ENCODE measurements at regions of chr1 and their contacts with region 1.

Region 1: DNA sequence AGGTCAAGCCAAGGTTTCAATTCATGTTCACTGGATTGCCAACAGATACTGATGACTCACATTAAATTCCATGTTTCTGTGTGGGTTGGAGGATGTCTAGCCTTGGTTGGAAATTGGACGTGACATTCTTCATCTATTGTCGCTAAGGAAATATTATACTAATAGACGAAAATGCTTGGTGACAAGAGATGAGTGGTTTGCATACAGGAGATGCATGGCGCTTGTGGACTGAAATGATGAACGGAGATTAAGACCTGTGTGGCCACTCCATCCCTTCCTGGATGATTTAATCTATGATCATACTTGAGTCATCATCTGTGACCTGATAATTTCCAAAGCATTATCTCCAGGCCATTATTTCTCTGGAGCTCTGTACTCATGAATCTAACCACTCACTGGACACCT is 97.0 kb upstream of the CD34 start:
- DNase-seq: no peak
- ATAC-seq: no peak
- H3K4me3 ChIP-seq: no peak overlapping the region
- H3K4me3 Mint-ChIP-seq: no peak overlapping the region
- H3K27ac ChIP-seq: no peak overlapping the region
- H3K27ac Mint-ChIP-seq: no peak overlapping the region
- H3K4me1 ChIP-seq: no peaks in the 10 kb centered on the region
- H3K4me1 Mint-ChIP-seq: no peaks in the 10 kb centered on the region
- H3K27me3 ChIP-seq: no peaks in the 10 kb centered on the region
- H3K27me3 Mint-ChIP-seq: peaks cover under 1% of the 10 kb centered on the region
- CTCF ChIP-seq: no peak

Region 2: GRCh38 chr1:207981976-207982375 is 26.0 kb before region 1 on chr1:
- CTCF ChIA-PET with region 1: no interaction called
- POLR2A ChIA-PET with region 1: no interaction called
- intact Hi-C with region 1: no loop called
- DNase-seq: no peak
- ATAC-seq: peak; percentile 49
- H3K4me3 ChIP-seq: no peak overlapping the region
- H3K4me3 Mint-ChIP-seq: no peak overlapping the region
- H3K27ac ChIP-seq: no peak overlapping the region
- H3K27ac Mint-ChIP-seq: no peak overlapping the region
- H3K4me1 ChIP-seq: no peaks in the 10 kb centered on the region
- H3K4me1 Mint-ChIP-seq: no peaks in the 10 kb centered on the region
- H3K27me3 ChIP-seq: peaks cover 0 to 2% of the 10 kb centered on the region in 2 experiments
- H3K27me3 Mint-ChIP-seq: peaks cover 24% of the 10 kb centered on the region
- CTCF ChIP-seq: no peak

Region 3: GRCh38 chr1:207997486-207998268 is 10.3 kb before region 1 on chr1:
- CTCF ChIA-PET with region 1: interaction called, 14 read pairs
- POLR2A ChIA-PET with region 1: no interaction called
- intact Hi-C with region 1: no loop called
- DNase-seq: peak in 8 of 9 experiments; percentile 10 to 65 (median 48)
- ATAC-seq: peak; percentile 73
- H3K4me3 ChIP-seq: no peak overlapping the region
- H3K4me3 Mint-ChIP-seq: no peak overlapping the region
- H3K27ac ChIP-seq: no peak overlapping the region
- H3K27ac Mint-ChIP-seq: no peak overlapping the region
- H3K4me1 ChIP-seq: no peaks in the 10 kb centered on the region
- H3K4me1 Mint-ChIP-seq: no peaks in the 10 kb centered on the region
- H3K27me3 ChIP-seq: no peaks in the 10 kb centered on the region
- H3K27me3 Mint-ChIP-seq: peaks cover 4% of the 10 kb centered on the region
- CTCF ChIP-seq: peak; percentile 59